Panc1 (cell line): ENCODE measurements at regions of chr10 and their contacts with region 1.

Region 1: GRCh38 chr10:110918643-110919363 is at the start of gene BBIP1:
- DNase-seq: peak; percentile 99
- ATAC-seq: peak; percentile 94
- H3K4me3 ChIP-seq: peak within 1 kb of the TSS; percentile 91 to 93
- H3K27ac ChIP-seq: peak within 1 kb of the TSS; percentile 96
- H3K4me1 ChIP-seq: peaks cover 41% of the 10 kb centered on the region
- H3K27me3 ChIP-seq: no peaks in the 10 kb centered on the region
- CTCF ChIP-seq: no peak
- total RNA-seq, gene BBIP1: 55.2 TPM

Region 2: DNA sequence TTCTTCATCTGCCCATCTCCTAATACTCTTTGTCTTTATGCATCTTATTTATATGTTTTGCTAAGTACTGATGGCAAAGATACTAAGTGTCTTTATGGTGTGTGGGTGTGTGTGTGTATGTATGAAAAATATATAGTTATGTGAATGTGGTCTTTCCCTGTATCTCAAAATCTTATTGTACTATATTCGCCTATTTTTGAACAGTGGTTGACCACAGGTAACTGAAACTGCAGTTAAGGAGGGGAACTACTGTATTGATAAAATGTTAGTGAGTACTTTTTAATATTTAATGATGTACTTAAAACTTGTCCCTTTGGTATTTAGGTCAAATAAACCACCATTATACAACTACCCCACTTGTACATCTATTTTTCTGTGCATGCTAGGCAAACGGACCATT is 825.1 kb before region 1 on chr10:
- CTCF ChIA-PET with region 1: no interaction called
- POLR2A ChIA-PET with region 1: no interaction called
- in situ Hi-C with region 1: no loop called
- intact Hi-C with region 1: no loop called
- DNase-seq: no peak
- ATAC-seq: no peak
- H3K4me3 ChIP-seq: no peak overlapping the region
- H3K27ac ChIP-seq: no peak overlapping the region
- H3K4me1 ChIP-seq: no peaks in the 10 kb centered on the region
- H3K27me3 ChIP-seq: no peaks in the 10 kb centered on the region
- CTCF ChIP-seq: no peak

Region 3: DNA sequence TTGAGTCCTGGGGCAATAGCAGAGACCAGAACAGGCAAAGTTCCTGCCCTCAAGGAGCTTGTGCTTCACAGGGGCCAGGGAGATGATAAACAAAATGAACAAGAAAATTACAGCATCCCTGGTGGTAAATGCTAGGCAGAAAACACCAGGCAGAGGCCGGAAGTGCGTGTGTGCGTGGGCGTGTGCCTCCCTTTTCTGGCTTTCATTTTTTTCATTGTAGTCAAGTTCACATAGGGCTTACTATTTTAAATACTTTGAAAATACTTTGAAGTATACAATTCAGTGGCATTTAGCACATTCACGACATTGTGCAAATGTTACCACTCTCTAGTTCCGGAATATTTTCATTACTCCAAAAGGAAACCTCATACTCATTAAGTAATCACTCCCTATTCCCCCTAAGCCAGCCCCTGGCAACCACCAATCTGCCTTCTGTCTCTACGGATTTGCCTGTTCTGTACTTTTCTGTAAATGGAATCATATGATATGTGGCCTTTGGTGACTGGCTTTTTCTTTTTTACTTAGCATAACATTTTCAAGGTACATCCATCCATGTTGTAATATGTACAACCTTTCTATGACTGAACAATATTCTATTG is 135.2 kb before region 1 on chr10:
- CTCF ChIA-PET with region 1: interaction called, 10 read pairs
- POLR2A ChIA-PET with region 1: no interaction called
- in situ Hi-C with region 1: no loop called
- intact Hi-C with region 1: no loop called
- DNase-seq: no peak
- ATAC-seq: no peak
- H3K4me3 ChIP-seq: no peak overlapping the region
- H3K27ac ChIP-seq: no peak overlapping the region
- H3K4me1 ChIP-seq: no peaks in the 10 kb centered on the region
- H3K27me3 ChIP-seq: peaks cover 8% of the 10 kb centered on the region
- CTCF ChIP-seq: no peak

Region 4: GRCh38 chr10:111175787-111176186 is 257.0 kb after region 1 on chr10:
- CTCF ChIA-PET with region 1: no interaction called
- POLR2A ChIA-PET with region 1: interaction called, 14 read pairs
- in situ Hi-C with region 1: no loop called
- intact Hi-C with region 1: no loop called
- DNase-seq: no peak
- ATAC-seq: no peak
- H3K4me3 ChIP-seq: no peak overlapping the region
- H3K27ac ChIP-seq: no peak overlapping the region
- H3K4me1 ChIP-seq: no peaks in the 10 kb centered on the region
- H3K27me3 ChIP-seq: no peaks in the 10 kb centered on the region
- CTCF ChIP-seq: no peak